CD14-positive monocyte (primary cell): ENCODE measurements at regions of chr3 and their contacts with region 1.

Region 1: GRCh38 chr3:122055215-122055614 is at the start of gene CD86:
- DNase-seq: peak; percentile 90 to 94 (median 94)
- H3K4me3 ChIP-seq: peak within 1 kb of the TSS; percentile 72 to 98 (median 89)
- H3K4me3 Mint-ChIP-seq: peak within 1 kb of the TSS; percentile 94 to 97
- H3K27ac ChIP-seq: peak within 1 kb of the TSS; percentile 49 to 85
- H3K27ac Mint-ChIP-seq: peak within 1 kb of the TSS; percentile 93 to 99 (median 94)
- H3K4me1 ChIP-seq: peaks cover 38 to 53% of the 10 kb centered on the region in 2 donors
- H3K4me1 Mint-ChIP-seq: peaks cover 48% of the 10 kb centered on the region
- H3K27me3 ChIP-seq: no peaks in the 10 kb centered on the region
- H3K27me3 Mint-ChIP-seq: peaks cover 0 to 4% (median 2%) of the 10 kb centered on the region in 3 donors
- CTCF ChIP-seq: no peak
- polyA plus RNA-seq, gene CD86: 75.7 to 321 (median 273) TPM

Region 2: DNA sequence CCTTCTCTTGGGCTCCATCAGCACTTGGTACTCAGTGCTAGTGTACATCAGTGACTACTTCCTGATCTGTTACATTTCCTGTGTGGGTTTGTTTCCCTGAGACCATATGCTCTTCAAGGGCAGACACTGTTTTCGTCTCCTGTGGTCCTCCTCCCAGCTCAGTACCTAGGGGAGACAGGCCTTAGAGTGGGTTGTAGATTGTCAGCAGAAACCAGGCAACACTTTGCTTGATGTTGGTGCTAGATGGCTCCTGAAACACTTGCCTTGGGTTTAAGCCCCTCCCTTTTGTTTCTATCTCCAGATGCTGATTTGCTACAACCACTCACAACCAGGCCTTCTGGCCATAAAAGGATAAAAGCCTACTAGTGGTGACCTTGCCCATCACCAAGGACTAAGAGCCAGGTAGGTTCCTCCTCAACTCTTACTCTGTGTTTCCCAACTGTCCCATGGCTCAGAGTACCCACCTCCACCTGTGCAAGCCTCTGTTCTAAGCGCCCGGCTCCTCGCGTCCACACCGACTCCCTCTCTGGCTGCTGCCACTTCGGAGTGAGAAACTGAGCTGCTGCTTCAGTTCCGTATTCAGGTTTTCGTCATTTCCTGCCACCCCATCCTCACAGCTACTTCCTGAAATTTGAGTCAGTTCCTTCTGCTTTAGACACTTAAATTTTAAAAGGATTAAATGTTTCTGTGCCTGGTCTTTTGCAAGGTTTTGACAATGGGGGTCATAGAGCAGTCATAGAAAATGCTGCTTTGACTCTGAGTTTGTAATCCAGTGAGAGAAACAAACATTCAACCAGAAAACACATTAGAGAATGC is 394.7 kb before region 1 on chr3 and contains the start of gene HCLS1:
- intact Hi-C with region 1: no loop called
- DNase-seq: peak; percentile 90 to 92 (median 90)
- H3K4me3 ChIP-seq: peak within 1 kb of the TSS; percentile 69 to 98 (median 80)
- H3K4me3 Mint-ChIP-seq: peak within 1 kb of the TSS; percentile 94 to 99
- H3K27ac ChIP-seq: peak within 1 kb of the TSS; percentile 94 to 97
- H3K27ac Mint-ChIP-seq: peak within 1 kb of the TSS; percentile 99 to 100 (median 100)
- H3K4me1 ChIP-seq: peaks cover 38 to 41% of the 10 kb centered on the region in 2 donors
- H3K4me1 Mint-ChIP-seq: peaks cover 47% of the 10 kb centered on the region
- H3K27me3 ChIP-seq: no peaks in the 10 kb centered on the region
- H3K27me3 Mint-ChIP-seq: no peaks in the 10 kb centered on the region
- CTCF ChIP-seq: no peak
- polyA plus RNA-seq, gene HCLS1: 311 to 483 (median 475) TPM

Region 3: DNA sequence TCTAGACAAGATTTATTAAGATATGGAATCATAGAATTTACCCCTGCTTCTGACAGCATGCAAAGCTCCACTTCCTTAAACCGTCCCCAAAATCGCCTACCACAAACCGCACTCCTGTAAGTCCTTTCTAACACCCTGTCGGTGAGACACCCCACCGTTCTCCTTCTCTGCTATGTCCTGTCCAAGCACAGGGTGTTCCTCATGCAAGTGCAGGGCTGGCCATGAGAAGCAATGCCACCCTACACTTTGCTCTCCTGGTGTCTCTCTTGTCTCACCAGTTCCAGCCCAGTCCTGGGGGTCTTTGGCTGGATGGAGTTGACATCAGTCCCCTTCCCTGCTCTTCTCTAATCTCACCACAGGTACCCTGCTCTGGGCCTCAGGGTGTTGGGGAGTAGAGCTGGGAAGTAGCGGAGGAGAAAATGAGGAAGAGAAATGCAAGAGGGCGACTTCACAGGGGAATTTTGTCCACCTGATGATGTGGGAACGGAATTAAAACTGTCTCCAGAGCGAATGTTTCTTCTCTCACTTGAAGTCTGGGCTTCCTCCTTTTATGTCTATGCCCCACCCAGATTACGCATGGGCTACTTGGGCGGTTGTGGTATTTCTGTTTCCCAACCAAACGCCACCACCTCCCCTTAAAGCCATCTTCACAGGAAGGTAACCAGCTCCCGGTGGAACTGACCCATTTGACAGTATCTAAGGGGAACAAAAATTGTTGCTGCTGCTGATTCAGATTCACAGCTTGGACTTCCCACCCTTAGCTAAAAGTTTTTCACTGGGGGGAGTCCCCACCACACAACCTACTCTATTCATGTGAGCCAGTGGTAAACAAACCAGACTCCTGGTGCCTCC is 178.1 kb after region 1 on chr3:
- intact Hi-C with region 1: loop called in 1 of 2 experiments (anchors 5 kb)
- DNase-seq: peak; percentile 91 to 99 (median 95)
- H3K4me3 ChIP-seq: peak overlapping the region; percentile 19 to 66 (median 57)
- H3K4me3 Mint-ChIP-seq: peak overlapping the region; percentile 70 to 92
- H3K27ac ChIP-seq: peak overlapping the region; percentile 85 to 98
- H3K27ac Mint-ChIP-seq: peak overlapping the region; percentile 96 to 100 (median 98)
- H3K4me1 ChIP-seq: peaks cover 49 to 58% of the 10 kb centered on the region in 2 donors
- H3K4me1 Mint-ChIP-seq: peaks cover 60% of the 10 kb centered on the region
- H3K27me3 ChIP-seq: no peaks in the 10 kb centered on the region
- H3K27me3 Mint-ChIP-seq: peaks cover 0 to 3% (median 1%) of the 10 kb centered on the region in 3 donors
- CTCF ChIP-seq: peak; percentile 6